ENCODE measurements at regions of chr12 and their contacts with region 1.

Region 1: GRCh38 chr12:62435303-62436163 is 31.1 kb upstream of the MON2 start:
- DNase-seq: peak; percentile 77
- ATAC-seq: peak; percentile 89
- H3K4me3 ChIP-seq: peak overlapping the region; percentile 70
- H3K27ac ChIP-seq: no peak overlapping the region
- H3K4me1 ChIP-seq: no peaks in the 10 kb centered on the region
- H3K27me3 ChIP-seq: 0 out of 2 replicates have a peak, but pooled peaks cover 5% of the 10 kb centered on the region
- CTCF ChIP-seq: peak; percentile 67

Region 2: DNA sequence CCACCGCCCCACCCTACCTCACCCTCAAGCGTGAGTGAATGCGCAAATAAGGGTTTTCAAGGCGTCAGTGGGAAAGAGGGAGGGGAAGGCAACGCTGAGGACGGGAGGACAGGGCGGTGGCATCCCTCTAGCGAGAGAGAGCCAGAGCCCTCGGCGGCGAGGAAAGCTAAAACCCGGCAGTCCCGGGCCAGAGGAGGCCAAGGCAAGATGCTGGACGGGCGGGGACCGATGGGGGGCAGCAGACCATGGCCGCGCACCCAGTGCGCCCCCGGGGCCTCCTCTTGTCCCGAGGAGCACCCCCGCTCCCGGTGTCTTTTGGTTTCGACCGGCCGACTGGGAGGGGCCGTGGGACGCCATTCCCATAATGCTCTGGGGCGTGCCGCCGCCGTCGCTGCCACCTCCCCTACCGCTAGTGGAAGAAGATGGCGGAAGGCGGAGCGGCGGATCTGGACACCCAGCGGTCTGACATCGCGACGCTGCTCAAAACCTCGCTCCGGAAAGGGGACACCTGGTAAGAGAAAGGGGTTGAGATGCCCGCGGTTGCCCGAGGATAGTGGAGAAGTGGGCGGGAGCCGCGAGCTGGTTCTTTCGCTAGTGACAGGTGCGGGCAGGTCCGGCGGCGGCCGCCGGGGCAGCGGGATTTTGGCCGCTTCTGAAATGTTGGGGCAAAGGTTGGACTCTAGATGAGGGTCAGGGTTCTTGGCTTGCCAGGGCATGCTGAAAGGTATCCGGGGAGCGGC is 175.4 kb before region 1 on chr12 and contains the start of gene USP15:
- CTCF ChIA-PET with region 1: interaction called, 3 read pairs
- POLR2A ChIA-PET with region 1: no interaction called
- intact Hi-C with region 1: loop called (anchors 2 kb)
- DNase-seq: peak; percentile 95
- ATAC-seq: peak; percentile 86
- H3K4me3 ChIP-seq: peak within 1 kb of the TSS; percentile 99
- H3K27ac ChIP-seq: peak within 1 kb of the TSS; percentile 77
- H3K4me1 ChIP-seq: peaks cover 23% of the 10 kb centered on the region
- H3K27me3 ChIP-seq: no peaks in the 10 kb centered on the region
- CTCF ChIP-seq: peak; percentile 64
- total RNA-seq, gene USP15: 39.3 and 46.1 TPM in 2 replicates

Region 3: GRCh38 chr12:62448436-62448835 is 12.9 kb after region 1 on chr12:
- CTCF ChIA-PET with region 1: no interaction called
- POLR2A ChIA-PET with region 1: no interaction called
- intact Hi-C with region 1: no loop called
- DNase-seq: no peak
- ATAC-seq: no peak
- H3K4me3 ChIP-seq: no peak overlapping the region
- H3K27ac ChIP-seq: no peak overlapping the region
- H3K4me1 ChIP-seq: no peaks in the 10 kb centered on the region
- H3K27me3 ChIP-seq: 0 out of 2 replicates have a peak, but pooled peaks cover 4% of the 10 kb centered on the region
- CTCF ChIP-seq: no peak

Region 4: GRCh38 chr12:62522984-62523383 is 87.5 kb after region 1 on chr12:
- CTCF ChIA-PET with region 1: interaction called, 3 read pairs
- POLR2A ChIA-PET with region 1: no interaction called
- intact Hi-C with region 1: loop called (anchors 5 kb)
- DNase-seq: peak; percentile 18
- ATAC-seq: peak; percentile 62
- H3K4me3 ChIP-seq: no peak overlapping the region
- H3K27ac ChIP-seq: no peak overlapping the region
- H3K4me1 ChIP-seq: no peaks in the 10 kb centered on the region
- H3K27me3 ChIP-seq: no peaks in the 10 kb centered on the region
- CTCF ChIP-seq: peak; percentile 43; the same call in 1 of the 2 replicates

Region 5: DNA sequence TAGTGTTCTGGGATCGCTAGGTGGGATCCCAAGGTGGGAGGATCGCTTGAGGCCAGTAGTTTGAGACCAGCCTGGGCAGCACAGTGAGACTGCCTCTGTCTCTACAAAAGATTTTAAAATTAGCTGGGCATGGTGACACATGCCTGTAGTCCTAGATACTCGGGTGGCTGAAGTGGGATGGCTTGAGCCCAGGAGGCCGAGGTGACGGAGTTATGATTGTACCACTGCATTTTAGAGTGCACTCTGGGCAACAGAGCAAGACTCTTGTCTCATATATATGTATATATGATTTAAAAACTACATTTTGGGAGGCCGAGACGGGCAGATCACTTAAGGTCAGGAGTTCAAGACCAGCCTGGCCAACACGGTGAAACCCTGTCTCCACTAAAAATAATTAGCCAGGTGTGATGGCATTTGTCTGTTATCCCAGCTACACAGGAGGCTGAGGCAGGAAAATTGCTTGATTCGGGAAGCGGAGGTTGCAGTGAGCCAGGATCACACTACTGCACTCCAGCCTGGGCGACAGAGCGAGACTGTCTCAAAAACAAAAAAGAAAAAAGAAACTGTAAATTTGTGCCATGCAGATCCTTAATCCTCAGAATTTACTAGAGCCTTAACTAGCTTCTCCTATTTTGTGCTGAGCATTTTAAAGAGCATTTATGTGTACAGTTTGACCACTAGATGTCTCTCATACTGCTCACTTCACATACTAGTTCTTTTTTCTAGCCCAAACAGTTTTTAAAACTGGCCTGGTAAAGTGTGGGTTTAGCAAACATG is 145.9 kb after region 1 on chr12:
- CTCF ChIA-PET with region 1: no interaction called
- POLR2A ChIA-PET with region 1: no interaction called
- intact Hi-C with region 1: loop called (anchors 5 kb)
- DNase-seq: peak; percentile 65
- ATAC-seq: peak; percentile 89
- H3K4me3 ChIP-seq: no peak overlapping the region
- H3K27ac ChIP-seq: no peak overlapping the region
- H3K4me1 ChIP-seq: no peaks in the 10 kb centered on the region
- H3K27me3 ChIP-seq: no peaks in the 10 kb centered on the region
- CTCF ChIP-seq: peak; percentile 83

Region 6: GRCh38 chr12:62793256-62794217 is 358.0 kb after region 1 on chr12:
- CTCF ChIA-PET with region 1: no interaction called
- POLR2A ChIA-PET with region 1: no interaction called
- intact Hi-C with region 1: loop called (anchors 1 kb)
- DNase-seq: peak; percentile 90
- ATAC-seq: peak; percentile 91
- H3K4me3 ChIP-seq: no peak overlapping the region
- H3K27ac ChIP-seq: peak overlapping the region; percentile 59
- H3K4me1 ChIP-seq: peaks cover 19% of the 10 kb centered on the region
- H3K27me3 ChIP-seq: no peaks in the 10 kb centered on the region
- CTCF ChIP-seq: peak; percentile 93

Region 7: GRCh38 chr12:62799126-62799736 is 363.7 kb after region 1 on chr12:
- CTCF ChIA-PET with region 1: no interaction called
- POLR2A ChIA-PET with region 1: no interaction called
- intact Hi-C with region 1: loop called (anchors 1 kb)
- DNase-seq: peak; percentile 87
- ATAC-seq: peak; percentile 56
- H3K4me3 ChIP-seq: no peak overlapping the region
- H3K27ac ChIP-seq: peak overlapping the region; percentile 91
- H3K4me1 ChIP-seq: peaks cover 17% of the 10 kb centered on the region
- H3K27me3 ChIP-seq: no peaks in the 10 kb centered on the region
- CTCF ChIP-seq: peak; percentile 94

Region 8: DNA sequence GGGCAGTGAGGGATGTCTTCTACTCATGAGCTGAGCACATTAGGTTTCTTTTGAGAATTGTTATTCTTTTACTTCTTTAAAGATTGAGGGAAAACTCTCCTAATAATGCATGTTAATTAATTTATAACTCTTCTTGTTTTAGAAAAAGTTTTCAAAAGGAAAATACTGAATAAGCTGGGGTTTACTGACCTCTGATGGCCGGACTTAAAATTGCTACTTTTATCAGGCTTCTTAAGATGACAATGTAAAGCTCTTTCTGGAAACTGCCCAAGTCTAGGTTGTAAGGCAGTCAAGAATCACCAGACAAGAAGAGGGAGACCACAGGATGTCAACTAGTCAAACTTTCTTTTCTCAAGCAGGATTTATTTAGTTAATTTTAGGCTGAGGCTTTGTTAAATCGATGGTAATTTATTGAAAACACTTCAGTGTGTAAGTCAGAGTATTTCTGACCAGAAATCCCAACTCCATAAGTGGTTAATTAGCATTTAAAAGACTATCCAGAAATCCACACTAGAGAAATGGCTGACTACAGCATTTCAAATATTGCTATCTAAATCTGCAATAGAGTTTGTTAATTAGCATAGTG is 633.4 kb after region 1 on chr12:
- CTCF ChIA-PET with region 1: interaction called, 3 read pairs
- POLR2A ChIA-PET with region 1: interaction called, 3 read pairs
- intact Hi-C with region 1: loop called (anchors 1 kb)
- DNase-seq: peak; percentile 87
- ATAC-seq: peak; percentile 48
- H3K4me3 ChIP-seq: no peak overlapping the region
- H3K27ac ChIP-seq: no peak overlapping the region
- H3K4me1 ChIP-seq: peaks cover 12% of the 10 kb centered on the region
- H3K27me3 ChIP-seq: no peaks in the 10 kb centered on the region
- CTCF ChIP-seq: peak; percentile 88

Measured in PC-3 (cell line).